Stomach (tissue), 19 donors: ENCODE measurements at regions of chr3 and their contacts with region 1.

Region 1: GRCh38 chr3:123652346-123652984 is 67.6 kb upstream of the HACD2 start:
- DNase-seq: peak; percentile 77 to 92
- H3K4me3 ChIP-seq: no peak overlapping the region
- H3K27ac ChIP-seq: peak overlapping the region; percentile 22 to 91 (median 79)
- H3K4me1 ChIP-seq: peaks cover 5 to 68% (median 40%) of the 10 kb centered on the region in 4 donors
- H3K27me3 ChIP-seq: no peaks in the 10 kb centered on the region
- CTCF ChIP-seq: peak in 5 of 7 experiments; percentile 72 to 86 (median 80)
- EP300 ChIP-seq: no peak
- POLR2A ChIP-seq: no peak

Region 2: DNA sequence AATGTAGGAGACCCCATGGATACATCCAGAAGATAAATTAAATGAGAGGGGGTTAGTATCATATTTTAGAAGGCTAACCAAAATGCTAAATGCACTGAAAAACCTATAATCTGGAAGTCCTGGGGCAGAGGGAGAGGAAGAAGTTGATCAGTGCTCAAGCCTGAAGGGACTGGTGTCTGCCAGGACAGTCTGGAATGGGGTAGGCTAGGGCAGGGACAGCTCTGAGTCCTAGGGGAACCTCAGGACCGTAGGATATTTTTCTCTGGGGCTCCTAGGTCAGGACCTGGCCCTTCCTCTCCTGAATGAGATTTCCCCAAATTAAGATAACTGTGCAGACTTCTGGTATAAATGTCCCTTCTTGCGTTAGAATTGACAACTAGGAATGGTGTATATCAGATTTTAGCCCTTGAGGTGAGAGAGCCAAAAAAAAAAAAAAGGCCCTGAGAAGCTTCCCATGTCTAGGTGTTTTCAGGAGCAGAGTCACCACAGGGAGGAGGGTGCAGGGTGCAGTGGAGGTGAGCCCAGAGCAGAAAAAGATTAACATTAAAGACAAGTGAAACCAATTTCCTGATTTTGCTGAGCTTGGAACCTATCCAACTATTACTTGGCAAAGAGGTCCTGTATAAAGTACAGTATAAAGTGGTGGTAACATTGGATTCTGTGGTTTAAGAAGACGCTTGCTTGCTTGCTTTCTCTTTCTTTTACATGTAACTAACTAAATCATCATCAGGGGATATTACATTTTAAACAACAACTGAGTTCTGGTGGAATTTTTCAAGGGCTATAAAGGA is 131.1 kb before region 1 on chr3:
- intact Hi-C with region 1: no loop called
- DNase-seq: peak in 1 of 2 donors; percentile 54
- H3K4me3 ChIP-seq: no peak overlapping the region
- H3K27ac ChIP-seq: peak overlapping the region in 2 of 5 donors; percentile 28 to 31
- H3K4me1 ChIP-seq: peaks cover 0 to 16% (median 12%) of the 10 kb centered on the region in 4 donors
- H3K27me3 ChIP-seq: no peaks in the 10 kb centered on the region
- CTCF ChIP-seq: no peak
- EP300 ChIP-seq: no peak
- POLR2A ChIP-seq: no peak

Region 3: GRCh38 chr3:123694366-123695145 is 42.1 kb after region 1 on chr3:
- intact Hi-C with region 1: loop called (anchors 5 kb)
- DNase-seq: peak in 1 of 2 donors; percentile 67
- H3K4me3 ChIP-seq: peak overlapping the region; percentile 6 to 51 (median 30)
- H3K27ac ChIP-seq: peak overlapping the region; percentile 27 to 91 (median 81)
- H3K4me1 ChIP-seq: peaks cover 12 to 78% (median 54%) of the 10 kb centered on the region in 4 donors
- H3K27me3 ChIP-seq: no peaks in the 10 kb centered on the region
- CTCF ChIP-seq: no peak
- EP300 ChIP-seq: no peak
- POLR2A ChIP-seq: no peak

Region 4: GRCh38 chr3:123712077-123712860 is 59.8 kb after region 1 on chr3:
- intact Hi-C with region 1: loop called (anchors 5 kb)
- DNase-seq: no peak
- H3K4me3 ChIP-seq: no peak overlapping the region
- H3K27ac ChIP-seq: no peak overlapping the region
- H3K4me1 ChIP-seq: peaks cover 0 to 8% (median 0%) of the 10 kb centered on the region in 4 donors
- H3K27me3 ChIP-seq: no peaks in the 10 kb centered on the region
- CTCF ChIP-seq: no peak
- EP300 ChIP-seq: no peak
- POLR2A ChIP-seq: no peak